ENCODE measurements at regions of chr18 and their contacts with region 1.

Region 1: DNA sequence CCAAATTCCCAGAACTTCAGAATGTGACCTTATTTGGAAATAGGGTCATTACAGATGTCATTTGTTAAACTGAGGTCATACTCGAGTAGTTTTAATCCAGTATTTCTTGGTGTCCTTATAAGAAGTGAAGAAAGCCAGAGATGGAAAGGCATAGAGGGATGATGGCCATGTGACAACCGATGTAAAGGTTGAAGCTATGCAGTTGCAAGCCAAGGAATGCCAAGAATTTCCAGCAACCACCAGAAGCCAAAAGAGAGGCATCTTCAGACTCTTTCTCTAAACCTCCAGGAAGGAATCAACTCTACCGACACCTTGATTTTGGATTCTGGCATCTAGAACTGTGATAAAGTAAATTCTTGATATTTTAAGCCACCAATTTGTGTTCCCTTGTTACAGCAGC is 242.2 kb downstream of the CDH20 start:
- DNase-seq: no peak
- H3K4me3 ChIP-seq: no peak overlapping the region
- H3K27ac ChIP-seq: no peak overlapping the region
- H3K4me1 ChIP-seq: peaks cover 29% of the 10 kb centered on the region
- H3K27me3 ChIP-seq: no peaks in the 10 kb centered on the region
- CTCF ChIP-seq: no peak

Region 2: GRCh38 chr18:61459896-61460648 is 115.3 kb before region 1 on chr18:
- intact Hi-C with region 1: no loop called
- DNase-seq: no peak
- H3K4me3 ChIP-seq: no peak overlapping the region
- H3K27ac ChIP-seq: no peak overlapping the region
- H3K4me1 ChIP-seq: no peaks in the 10 kb centered on the region
- H3K27me3 ChIP-seq: no peaks in the 10 kb centered on the region
- CTCF ChIP-seq: no peak

Region 3: GRCh38 chr18:61643884-61644647 is 68.6 kb after region 1 on chr18:
- intact Hi-C with region 1: no loop called
- DNase-seq: no peak
- H3K4me3 ChIP-seq: no peak overlapping the region
- H3K27ac ChIP-seq: no peak overlapping the region
- H3K4me1 ChIP-seq: no peaks in the 10 kb centered on the region
- H3K27me3 ChIP-seq: no peaks in the 10 kb centered on the region
- CTCF ChIP-seq: no peak

Region 4: DNA sequence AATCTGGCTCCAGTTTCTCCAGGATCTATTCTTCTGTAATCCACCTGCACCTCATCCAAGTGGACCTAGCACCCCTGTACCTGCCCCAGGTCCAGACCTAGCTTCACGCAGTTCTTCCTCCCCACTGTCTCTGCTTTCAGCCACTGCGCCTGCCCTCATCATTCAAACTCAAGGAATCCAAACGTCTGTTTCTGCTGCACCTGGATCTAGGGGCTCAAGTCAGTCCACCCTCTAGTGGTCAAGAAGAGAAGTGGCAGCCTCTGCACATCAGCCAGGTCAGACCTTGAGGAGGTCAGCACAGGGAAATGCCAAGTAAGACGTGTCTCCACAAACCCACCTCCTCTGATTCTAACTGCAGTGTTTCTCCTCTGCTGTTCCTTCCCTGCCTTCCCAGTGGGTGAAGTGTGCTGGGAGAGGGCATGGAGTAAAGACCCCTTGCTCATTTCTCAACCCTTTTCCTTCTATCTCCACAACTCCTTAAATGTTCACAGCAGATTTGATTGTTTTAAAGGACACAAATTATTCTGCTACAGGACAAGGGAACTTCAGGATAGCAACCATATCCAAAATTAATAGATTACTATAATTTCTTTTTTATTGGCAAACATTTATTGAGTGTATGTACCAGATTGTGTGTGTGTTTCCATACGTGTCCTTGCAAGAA is 326.0 kb after region 1 on chr18:
- intact Hi-C with region 1: loop called (anchors 10 kb)
- DNase-seq: no peak
- H3K4me3 ChIP-seq: no peak overlapping the region
- H3K27ac ChIP-seq: no peak overlapping the region
- H3K4me1 ChIP-seq: peaks cover 2% of the 10 kb centered on the region
- H3K27me3 ChIP-seq: no peaks in the 10 kb centered on the region
- CTCF ChIP-seq: peak; percentile 96

Measured in left ventricle myocardium inferior (tissue), 1 donor.